ENCODE measurements at regions of chr5 and their contacts with region 1.

Region 1: DNA sequence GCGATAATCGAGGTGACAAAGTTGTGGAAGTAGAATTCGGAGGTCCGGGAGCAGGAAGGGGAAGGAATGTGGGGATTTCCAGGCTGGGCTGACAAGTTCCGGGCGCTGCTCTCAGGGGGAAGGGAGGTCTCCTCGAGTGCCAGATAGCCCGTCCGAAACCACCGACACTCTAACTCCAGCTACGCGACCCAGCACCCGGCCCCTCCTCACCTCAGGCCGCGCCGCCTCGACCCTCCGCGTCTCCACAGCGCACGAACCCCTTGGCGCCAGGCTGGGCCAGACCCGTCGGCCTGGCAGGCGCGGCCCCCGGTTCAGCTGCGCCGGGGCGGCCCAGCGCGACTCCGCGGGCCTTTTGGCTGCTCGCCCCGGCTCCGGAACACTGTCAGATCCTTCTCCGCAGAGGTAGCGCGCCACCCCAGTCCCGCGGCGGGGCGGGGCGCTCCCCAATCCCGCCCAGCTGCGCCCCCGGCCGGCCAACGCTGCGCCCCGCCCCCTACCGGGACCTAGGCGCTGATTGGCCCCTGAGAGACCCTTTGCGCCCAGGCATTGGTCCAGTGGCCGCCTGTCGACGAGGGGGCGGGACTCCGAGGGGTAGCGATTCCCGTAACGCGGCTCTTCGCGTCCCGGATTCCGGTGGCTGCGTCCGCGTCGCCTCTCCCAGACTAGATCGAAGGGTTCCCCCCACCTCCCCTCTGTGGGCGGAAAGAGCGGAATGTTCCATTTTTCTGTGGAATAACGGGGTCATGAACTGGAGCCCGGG is at the start of gene IL6ST:
- DNase-seq: peak; percentile 98 to 99
- H3K4me3 ChIP-seq: peak within 1 kb of the TSS; percentile 97
- H3K4me3 Mint-ChIP-seq: peak within 1 kb of the TSS; percentile 86
- H3K27ac Mint-ChIP-seq: peak within 1 kb of the TSS; percentile 85
- H3K4me1 ChIP-seq: peaks cover 57% of the 10 kb centered on the region
- H3K4me1 Mint-ChIP-seq: peaks cover 48% of the 10 kb centered on the region
- H3K27me3 ChIP-seq: no peaks in the 10 kb centered on the region
- H3K27me3 Mint-ChIP-seq: no peaks in the 10 kb centered on the region
- CTCF ChIP-seq: no peak
- total RNA-seq, gene IL6ST: 265 and 278 TPM in 2 replicates

Region 2: GRCh38 chr5:56070851-56071465 is 76.2 kb after region 1 on chr5:
- CTCF ChIA-PET with region 1: no interaction called
- POLR2A ChIA-PET with region 1: interaction called, 3 read pairs
- intact Hi-C with region 1: loop called (anchors 5 kb)
- DNase-seq: no peak
- H3K4me3 ChIP-seq: no peak overlapping the region
- H3K4me3 Mint-ChIP-seq: no peak overlapping the region
- H3K27ac Mint-ChIP-seq: peak overlapping the region; percentile 30
- H3K4me1 ChIP-seq: peaks cover 56% of the 10 kb centered on the region
- H3K4me1 Mint-ChIP-seq: peaks cover 34% of the 10 kb centered on the region
- H3K27me3 ChIP-seq: no peaks in the 10 kb centered on the region
- H3K27me3 Mint-ChIP-seq: no peaks in the 10 kb centered on the region
- CTCF ChIP-seq: no peak

Region 3: GRCh38 chr5:56123531-56124243 is 128.9 kb after region 1 on chr5:
- CTCF ChIA-PET with region 1: no interaction called
- POLR2A ChIA-PET with region 1: interaction called, 7 read pairs
- intact Hi-C with region 1: loop called (anchors 1 kb)
- DNase-seq: peak; percentile 94 to 98
- H3K4me3 ChIP-seq: no peak overlapping the region
- H3K4me3 Mint-ChIP-seq: peak overlapping the region; percentile 65
- H3K27ac Mint-ChIP-seq: peak overlapping the region; percentile 99
- H3K4me1 ChIP-seq: peaks cover 46% of the 10 kb centered on the region
- H3K4me1 Mint-ChIP-seq: peaks cover 32% of the 10 kb centered on the region
- H3K27me3 ChIP-seq: no peaks in the 10 kb centered on the region
- H3K27me3 Mint-ChIP-seq: no peaks in the 10 kb centered on the region
- CTCF ChIP-seq: no peak

Region 4: DNA sequence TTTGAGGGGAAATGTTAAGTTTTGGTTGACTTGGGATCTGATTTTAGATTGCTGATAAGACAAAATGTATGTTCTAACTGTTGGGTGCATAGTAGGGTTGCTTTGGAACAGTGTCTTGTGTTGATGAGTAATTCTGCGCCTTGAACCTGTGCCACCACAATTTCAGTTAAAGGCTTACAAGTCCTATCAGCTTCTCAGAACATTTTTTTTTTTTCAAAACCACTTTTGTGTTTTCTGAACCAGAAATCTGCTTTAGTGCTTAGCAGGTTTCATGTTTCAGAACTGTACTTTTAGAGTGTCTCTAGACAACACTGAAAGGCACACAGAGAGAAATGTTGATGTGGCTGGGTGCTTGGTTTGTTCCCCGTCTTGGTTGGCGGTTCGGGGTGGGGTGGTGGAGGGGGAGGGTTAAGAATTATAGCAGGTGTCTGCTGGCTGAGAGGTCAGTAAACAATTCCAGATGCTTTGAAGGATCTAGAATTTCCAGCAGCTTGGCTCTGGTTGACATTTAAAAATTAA is 153.8 kb after region 1 on chr5:
- CTCF ChIA-PET with region 1: no interaction called
- POLR2A ChIA-PET with region 1: interaction called, 5 read pairs
- intact Hi-C with region 1: loop called (anchors 2 kb)
- DNase-seq: no peak
- H3K4me3 ChIP-seq: no peak overlapping the region
- H3K4me3 Mint-ChIP-seq: no peak overlapping the region
- H3K27ac Mint-ChIP-seq: peak overlapping the region; percentile 32
- H3K4me1 ChIP-seq: peaks cover 55% of the 10 kb centered on the region
- H3K4me1 Mint-ChIP-seq: peaks cover 38% of the 10 kb centered on the region
- H3K27me3 ChIP-seq: no peaks in the 10 kb centered on the region
- H3K27me3 Mint-ChIP-seq: no peaks in the 10 kb centered on the region
- CTCF ChIP-seq: no peak

Region 5: GRCh38 chr5:56155992-56156584 is 161.3 kb after region 1 on chr5:
- CTCF ChIA-PET with region 1: no interaction called
- POLR2A ChIA-PET with region 1: no interaction called
- intact Hi-C with region 1: loop called (anchors 1 kb)
- DNase-seq: no peak
- H3K4me3 ChIP-seq: no peak overlapping the region
- H3K4me3 Mint-ChIP-seq: no peak overlapping the region
- H3K27ac Mint-ChIP-seq: peak overlapping the region; percentile 90
- H3K4me1 ChIP-seq: peaks cover 69% of the 10 kb centered on the region
- H3K4me1 Mint-ChIP-seq: peaks cover 36% of the 10 kb centered on the region
- H3K27me3 ChIP-seq: no peaks in the 10 kb centered on the region
- H3K27me3 Mint-ChIP-seq: no peaks in the 10 kb centered on the region
- CTCF ChIP-seq: no peak